MCF 10A (cell line): ENCODE measurements at regions of chr3 and their contacts with region 1.

Region 1: DNA sequence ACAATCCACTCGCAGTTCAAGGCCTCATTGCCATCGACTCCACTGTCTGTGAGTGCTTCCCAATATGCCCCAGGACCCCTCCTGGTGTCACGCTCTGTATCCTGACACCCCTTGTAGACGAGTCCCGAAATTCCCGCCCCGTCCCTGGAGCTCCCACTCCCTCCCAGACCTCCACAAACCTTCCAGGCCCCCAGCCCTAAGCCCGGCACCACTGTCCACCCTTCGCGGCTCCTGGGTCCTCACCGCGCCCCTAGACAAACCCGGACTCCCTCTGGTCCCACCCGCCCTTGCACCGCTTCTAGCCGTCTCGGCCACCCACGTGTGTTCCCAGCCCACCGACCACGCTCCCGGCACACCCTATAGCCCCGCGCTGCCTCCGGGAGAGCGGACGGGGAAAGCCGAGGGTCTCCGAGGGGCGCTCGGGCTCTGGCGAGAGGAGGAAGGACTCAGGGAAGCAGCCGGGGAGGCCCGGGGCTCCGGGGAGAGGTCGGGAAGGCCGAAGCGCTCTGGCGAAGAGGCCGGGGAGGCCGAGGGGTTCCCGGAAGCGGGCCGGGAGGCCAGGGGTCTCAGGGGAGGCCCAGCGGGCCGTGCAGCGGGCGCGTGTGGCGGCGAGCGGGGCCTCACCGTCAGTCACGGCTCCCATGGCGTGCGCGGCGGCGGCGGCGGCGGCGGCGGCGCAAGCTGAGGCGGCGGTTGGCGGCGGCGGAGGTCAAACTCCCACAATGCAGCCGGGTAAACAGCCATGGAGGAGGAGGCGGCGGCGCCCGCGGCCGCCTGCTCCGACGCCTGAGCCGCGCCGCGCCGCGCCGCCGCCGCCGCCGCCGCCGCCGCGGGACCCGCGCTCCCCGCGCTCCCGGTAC is at the starts of genes ATXN7 and THOC7:
- DNase-seq: peak; percentile 68
- H3K4me3 Mint-ChIP-seq: peak within 1 kb of the TSS; percentile 84
- H3K27ac Mint-ChIP-seq: peak within 1 kb of the TSS; percentile 84
- H3K4me1 Mint-ChIP-seq: peaks cover 46% of the 10 kb centered on the region
- H3K27me3 Mint-ChIP-seq: no peaks in the 10 kb centered on the region
- CTCF ChIP-seq: no peak
- total RNA-seq, gene ATXN7: 29.2 and 36.7 TPM in 2 replicates
- total RNA-seq, gene THOC7: 117 and 123 TPM in 2 replicates

Region 2: GRCh38 chr3:63753567-63753966 is 109.8 kb before region 1 on chr3:
- CTCF ChIA-PET with region 1: no interaction called
- POLR2A ChIA-PET with region 1: no interaction called
- intact Hi-C with region 1: no loop called
- DNase-seq: peak; percentile 57
- H3K4me3 Mint-ChIP-seq: no peak overlapping the region
- H3K27ac Mint-ChIP-seq: no peak overlapping the region
- H3K4me1 Mint-ChIP-seq: no peaks in the 10 kb centered on the region
- H3K27me3 Mint-ChIP-seq: no peaks in the 10 kb centered on the region
- CTCF ChIP-seq: no peak

Region 3: GRCh38 chr3:63809607-63810006 is 53.8 kb before region 1 on chr3:
- CTCF ChIA-PET with region 1: no interaction called
- POLR2A ChIA-PET with region 1: no interaction called
- intact Hi-C with region 1: no loop called
- DNase-seq: peak; percentile 66
- H3K4me3 Mint-ChIP-seq: no peak overlapping the region
- H3K27ac Mint-ChIP-seq: no peak overlapping the region
- H3K4me1 Mint-ChIP-seq: peaks cover 13% of the 10 kb centered on the region
- H3K27me3 Mint-ChIP-seq: peaks cover 3% of the 10 kb centered on the region
- CTCF ChIP-seq: no peak

Region 4: DNA sequence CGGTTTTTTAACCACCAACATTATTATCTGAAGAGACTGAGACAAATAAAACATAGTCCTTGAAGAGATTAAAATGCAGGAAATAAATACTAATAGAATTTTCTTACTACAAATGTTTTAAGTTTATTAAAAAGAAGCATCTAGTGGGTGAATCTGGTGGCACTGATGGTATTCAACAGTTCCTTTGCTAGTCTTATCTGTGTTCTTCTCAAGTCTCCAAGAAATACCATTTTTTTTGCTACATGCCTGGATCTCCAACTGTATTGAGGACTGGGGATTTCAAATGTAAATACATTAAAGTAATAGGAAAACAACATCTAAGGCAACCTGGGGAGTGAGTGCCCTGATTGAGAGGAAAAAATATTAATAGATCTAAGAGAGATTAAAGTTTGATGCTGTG is 21.7 kb before region 1 on chr3:
- CTCF ChIA-PET with region 1: no interaction called
- POLR2A ChIA-PET with region 1: no interaction called
- intact Hi-C with region 1: no loop called
- DNase-seq: no peak
- H3K4me3 Mint-ChIP-seq: no peak overlapping the region
- H3K27ac Mint-ChIP-seq: no peak overlapping the region
- H3K4me1 Mint-ChIP-seq: no peaks in the 10 kb centered on the region
- H3K27me3 Mint-ChIP-seq: no peaks in the 10 kb centered on the region
- CTCF ChIP-seq: no peak

Region 5: GRCh38 chr3:63874769-63875168 is 11.4 kb after region 1 on chr3:
- CTCF ChIA-PET with region 1: no interaction called
- POLR2A ChIA-PET with region 1: interaction called, 13 read pairs
- intact Hi-C with region 1: no loop called
- DNase-seq: no peak
- H3K4me3 Mint-ChIP-seq: no peak overlapping the region
- H3K27ac Mint-ChIP-seq: no peak overlapping the region
- H3K4me1 Mint-ChIP-seq: peaks cover 26% of the 10 kb centered on the region
- H3K27me3 Mint-ChIP-seq: no peaks in the 10 kb centered on the region
- CTCF ChIP-seq: no peak